Colonic mucosa (tissue), 4 donors: ENCODE measurements at regions of chr11 and their contacts with region 1.

Region 1: DNA sequence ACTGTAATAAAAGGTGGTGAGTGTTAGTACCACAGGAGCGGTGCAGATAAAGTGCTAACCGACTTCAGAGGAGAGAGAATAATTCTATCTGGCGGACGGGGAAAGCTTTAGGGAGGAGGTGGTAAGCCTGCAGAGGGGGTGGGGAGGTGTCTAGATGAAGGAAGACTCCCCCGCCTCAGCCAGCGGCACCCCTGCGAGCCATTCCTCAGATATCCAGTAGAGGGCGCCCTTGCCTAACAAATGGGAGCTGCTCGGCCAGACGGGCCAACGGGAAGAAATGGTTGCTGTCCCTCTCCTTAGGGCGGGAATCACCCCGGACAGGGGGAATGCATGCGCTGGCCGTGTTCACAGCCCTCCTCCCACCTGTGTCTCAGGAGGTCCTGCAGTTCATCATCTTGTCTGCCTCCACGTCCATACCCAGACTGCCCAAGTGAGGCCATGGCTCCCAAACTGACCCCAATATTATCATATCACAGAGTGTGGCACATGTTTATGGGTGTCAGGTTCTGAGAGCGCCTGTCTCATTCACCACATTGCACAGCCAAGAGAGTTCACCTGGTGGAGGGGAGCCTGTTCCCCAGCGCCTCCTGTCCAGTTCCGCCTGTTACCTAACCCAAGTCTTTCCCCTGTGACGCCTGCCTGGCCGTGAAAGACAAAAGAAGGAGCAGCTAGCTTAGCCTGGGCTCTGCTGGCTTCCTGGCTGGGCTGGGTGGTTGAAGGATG is 85.5 kb downstream of the ST3GAL4 start:
- DNase-seq: peak; percentile 82
- H3K4me3 ChIP-seq: no peak overlapping the region
- H3K27ac ChIP-seq: no peak overlapping the region
- H3K4me1 ChIP-seq: no peaks in the 10 kb centered on the region
- H3K27me3 ChIP-seq: no peaks in the 10 kb centered on the region
- CTCF ChIP-seq: peak; percentile 94

Region 2: GRCh38 chr11:126403658-126404057 is 37.3 kb before region 1 on chr11:
- intact Hi-C with region 1: no loop called
- DNase-seq: no peak
- H3K4me3 ChIP-seq: no peak overlapping the region
- H3K27ac ChIP-seq: peak overlapping the region; percentile 80
- H3K4me1 ChIP-seq: peaks cover 6% of the 10 kb centered on the region
- H3K27me3 ChIP-seq: no peaks in the 10 kb centered on the region
- CTCF ChIP-seq: no peak

Region 3: GRCh38 chr11:126480410-126481302 is 39.7 kb after region 1 on chr11:
- intact Hi-C with region 1: loop called (anchors 5 kb)
- DNase-seq: peak; percentile 85
- H3K4me3 ChIP-seq: no peak overlapping the region
- H3K27ac ChIP-seq: peak overlapping the region; percentile 19
- H3K4me1 ChIP-seq: peaks cover 5% of the 10 kb centered on the region
- H3K27me3 ChIP-seq: no peaks in the 10 kb centered on the region
- CTCF ChIP-seq: peak; percentile 83

Region 4: DNA sequence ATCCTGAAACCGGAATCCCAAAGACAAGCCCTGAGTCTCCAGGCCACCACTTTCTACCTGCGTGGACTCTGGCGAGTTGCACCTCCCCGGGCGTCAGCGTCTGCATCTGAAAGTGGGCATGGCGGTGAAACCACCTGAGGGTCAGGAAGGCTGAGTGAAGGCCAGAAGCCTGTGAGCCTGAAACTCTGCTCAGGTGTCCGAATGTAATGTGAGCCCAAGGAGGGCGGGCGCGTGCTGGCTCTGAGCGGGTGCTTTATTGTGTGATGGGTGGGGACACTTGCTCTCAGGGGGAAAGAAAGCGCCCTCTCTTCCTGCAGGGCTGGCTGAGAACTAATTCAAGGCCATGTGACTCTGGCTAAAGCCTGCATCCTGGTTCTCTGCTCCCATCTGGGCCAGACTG is 50.1 kb after region 1 on chr11:
- intact Hi-C with region 1: no loop called
- DNase-seq: no peak
- H3K4me3 ChIP-seq: no peak overlapping the region
- H3K27ac ChIP-seq: no peak overlapping the region
- H3K4me1 ChIP-seq: no peaks in the 10 kb centered on the region
- H3K27me3 ChIP-seq: no peaks in the 10 kb centered on the region
- CTCF ChIP-seq: no peak

Region 5: GRCh38 chr11:127345819-127346459 is 905.0 kb after region 1 on chr11:
- intact Hi-C with region 1: loop called (anchors 10 kb)
- DNase-seq: no peak
- H3K4me3 ChIP-seq: no peak overlapping the region
- H3K27ac ChIP-seq: no peak overlapping the region
- H3K4me1 ChIP-seq: no peaks in the 10 kb centered on the region
- H3K27me3 ChIP-seq: no peaks in the 10 kb centered on the region
- CTCF ChIP-seq: peak; percentile 41